ENCODE measurements at regions of chr12 and their contacts with region 1.

Region 1: GRCh38 chr12:104381731-104382480 is 74.8 kb upstream of the CHST11 start:
- DNase-seq: peak; percentile 88
- ATAC-seq: peak; percentile 95
- H3K4me3 Mint-ChIP-seq: peak overlapping the region; percentile 47
- H3K27ac Mint-ChIP-seq: no peak overlapping the region
- H3K4me1 Mint-ChIP-seq: peaks cover 10% of the 10 kb centered on the region
- H3K27me3 Mint-ChIP-seq: no peaks in the 10 kb centered on the region
- CTCF ChIP-seq: peak; percentile 91

Region 2: DNA sequence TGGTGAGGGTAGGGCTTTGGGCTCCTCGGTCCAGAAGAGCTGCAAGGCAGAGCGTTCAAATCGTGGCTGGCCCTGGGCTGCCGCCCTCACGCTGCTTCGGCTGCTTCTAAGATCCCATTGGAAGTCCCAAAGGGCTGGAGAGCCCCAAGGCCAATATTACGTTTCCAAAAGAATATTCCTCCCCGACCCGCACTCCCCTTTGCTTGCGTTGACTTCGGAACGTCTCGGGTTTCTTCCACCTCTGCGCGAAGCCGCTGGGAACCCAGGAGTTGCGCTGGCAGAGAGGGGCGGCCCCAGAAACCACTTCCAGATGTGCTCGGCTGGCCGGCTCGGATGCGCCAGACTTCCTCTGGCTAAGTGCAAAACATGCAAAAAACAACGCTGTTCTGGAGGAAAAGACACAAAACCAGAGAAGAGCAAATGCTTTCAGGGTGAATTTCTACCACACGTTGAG is 332.0 kb before region 1 on chr12 and contains the start of gene GLT8D2:
- CTCF ChIA-PET with region 1: no interaction called
- POLR2A ChIA-PET with region 1: no interaction called
- DNase-seq: peak; percentile 70
- ATAC-seq: peak; percentile 84
- H3K4me3 Mint-ChIP-seq: peak within 1 kb of the TSS; percentile 82
- H3K27ac Mint-ChIP-seq: peak within 1 kb of the TSS; percentile 80
- H3K4me1 Mint-ChIP-seq: peaks cover 18% of the 10 kb centered on the region
- H3K27me3 Mint-ChIP-seq: peaks cover 17% of the 10 kb centered on the region
- CTCF ChIP-seq: no peak
- total RNA-seq, gene GLT8D2: 4.5 to 10.2 TPM (median 8.8 TPM) in 3 replicates

Region 3: DNA sequence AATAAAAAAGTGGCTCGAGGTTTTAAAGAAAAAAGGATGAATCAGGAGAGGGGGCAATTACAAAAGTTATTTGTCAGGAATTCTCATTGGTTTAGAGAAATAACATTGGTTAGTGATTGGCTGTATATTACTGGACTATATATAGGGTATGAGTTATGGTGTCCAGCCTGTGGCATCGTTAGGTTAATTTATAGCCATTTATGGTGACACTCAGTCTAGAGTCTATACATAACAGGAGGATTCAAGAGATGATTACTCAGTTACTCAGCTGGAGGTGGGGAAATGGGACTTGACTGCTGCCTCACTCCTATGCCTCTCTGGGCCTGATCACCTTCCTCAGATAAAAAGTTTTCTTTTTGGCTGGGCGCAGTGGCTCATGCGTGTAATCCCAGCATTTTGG is 218.3 kb before region 1 on chr12:
- CTCF ChIA-PET with region 1: no interaction called
- POLR2A ChIA-PET with region 1: no interaction called
- DNase-seq: no peak
- ATAC-seq: no peak
- H3K4me3 Mint-ChIP-seq: no peak overlapping the region
- H3K27ac Mint-ChIP-seq: no peak overlapping the region
- H3K4me1 Mint-ChIP-seq: peaks cover 3% of the 10 kb centered on the region
- H3K27me3 Mint-ChIP-seq: peaks cover 4% of the 10 kb centered on the region; the same call in 1 of the 2 replicates
- CTCF ChIP-seq: no peak

Region 4: GRCh38 chr12:104263580-104264358 is 118.1 kb before region 1 on chr12:
- CTCF ChIA-PET with region 1: no interaction called
- POLR2A ChIA-PET with region 1: no interaction called
- DNase-seq: no peak
- ATAC-seq: no peak
- H3K4me3 Mint-ChIP-seq: no peak overlapping the region
- H3K27ac Mint-ChIP-seq: peak overlapping the region; percentile 16
- H3K4me1 Mint-ChIP-seq: peaks cover 11% of the 10 kb centered on the region
- H3K27me3 Mint-ChIP-seq: no peaks in the 10 kb centered on the region
- CTCF ChIP-seq: no peak

Region 5: DNA sequence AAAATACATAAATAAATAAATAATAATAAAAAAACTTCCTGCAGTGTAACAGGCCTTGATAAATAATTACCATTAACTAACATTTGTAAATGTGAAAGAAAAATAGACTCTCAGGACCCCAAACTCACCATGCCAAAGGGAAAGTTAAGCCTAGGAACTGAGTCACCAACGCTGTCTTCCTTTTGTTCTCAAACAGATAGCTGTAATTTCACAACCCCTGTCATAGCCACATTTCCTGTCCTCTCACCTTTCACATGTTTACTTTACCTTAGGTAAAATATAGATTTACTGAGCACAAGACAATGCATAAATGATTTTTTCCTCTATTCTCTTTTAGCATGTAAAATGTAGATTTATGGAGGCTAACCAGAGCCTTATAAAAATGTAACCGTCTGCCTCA is 39.0 kb after region 1 on chr12:
- CTCF ChIA-PET with region 1: interaction called, 12 read pairs
- POLR2A ChIA-PET with region 1: no interaction called
- DNase-seq: no peak
- ATAC-seq: no peak
- H3K4me3 Mint-ChIP-seq: no peak overlapping the region
- H3K27ac Mint-ChIP-seq: no peak overlapping the region
- H3K4me1 Mint-ChIP-seq: no peaks in the 10 kb centered on the region
- H3K27me3 Mint-ChIP-seq: peaks cover 7% of the 10 kb centered on the region
- CTCF ChIP-seq: no peak

Region 6: GRCh38 chr12:104506676-104507401 is 124.9 kb after region 1 on chr12:
- CTCF ChIA-PET with region 1: interaction called, 14 read pairs
- POLR2A ChIA-PET with region 1: no interaction called
- DNase-seq: peak; percentile 29
- ATAC-seq: peak; percentile 68
- H3K4me3 Mint-ChIP-seq: peak overlapping the region; percentile 15; the same call in 1 of the 2 replicates
- H3K27ac Mint-ChIP-seq: peak overlapping the region; percentile 53
- H3K4me1 Mint-ChIP-seq: peaks cover 73% of the 10 kb centered on the region
- H3K27me3 Mint-ChIP-seq: no peaks in the 10 kb centered on the region
- CTCF ChIP-seq: no peak

Region 7: GRCh38 chr12:104605685-104606084 is 223.8 kb after region 1 on chr12:
- CTCF ChIA-PET with region 1: interaction called, 10 read pairs
- POLR2A ChIA-PET with region 1: no interaction called
- DNase-seq: peak; percentile 17
- ATAC-seq: peak; percentile 82
- H3K4me3 Mint-ChIP-seq: peak overlapping the region; percentile 49
- H3K27ac Mint-ChIP-seq: peak overlapping the region; percentile 85
- H3K4me1 Mint-ChIP-seq: peaks cover 31% of the 10 kb centered on the region
- H3K27me3 Mint-ChIP-seq: no peaks in the 10 kb centered on the region
- CTCF ChIP-seq: no peak

Region 8: DNA sequence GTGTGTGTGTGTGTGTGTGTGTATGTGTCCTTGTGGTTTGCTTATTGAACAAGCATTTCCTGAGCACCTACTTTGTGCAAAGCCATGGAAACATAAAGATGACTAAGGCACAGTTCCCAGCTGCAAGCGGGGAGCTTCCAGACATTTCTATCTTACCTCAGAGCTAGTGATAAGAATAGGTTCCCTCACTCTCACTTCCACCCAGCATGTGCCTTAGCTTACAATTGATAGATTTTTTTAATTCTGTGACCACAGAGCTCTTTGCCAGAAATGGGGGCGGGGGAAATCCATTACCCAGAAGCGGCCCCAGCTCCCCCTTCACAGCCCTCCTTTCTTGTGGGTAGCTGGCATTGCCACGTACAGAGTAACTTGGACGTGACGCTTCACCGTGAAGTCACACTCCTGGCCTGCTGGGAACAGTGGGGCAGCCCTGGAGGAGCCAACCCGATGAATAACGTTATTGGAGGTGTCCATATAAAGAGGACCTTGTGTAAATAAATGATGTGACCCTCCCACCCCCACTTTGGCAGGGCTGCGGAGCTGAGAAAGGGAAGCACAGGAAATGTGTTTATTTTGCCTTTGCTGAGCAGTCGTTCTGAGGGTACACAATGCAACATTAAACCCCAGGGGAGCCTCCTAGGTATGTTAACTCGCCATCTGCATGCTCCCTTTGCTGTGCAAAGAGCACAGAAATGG is 313.7 kb after region 1 on chr12:
- CTCF ChIA-PET with region 1: interaction called, 14 read pairs
- POLR2A ChIA-PET with region 1: no interaction called
- DNase-seq: no peak
- ATAC-seq: peak; percentile 56
- H3K4me3 Mint-ChIP-seq: no peak overlapping the region
- H3K27ac Mint-ChIP-seq: no peak overlapping the region; the same call in 1 of the 2 replicates
- H3K4me1 Mint-ChIP-seq: peaks cover 25% of the 10 kb centered on the region
- H3K27me3 Mint-ChIP-seq: no peaks in the 10 kb centered on the region
- CTCF ChIP-seq: no peak

Region 9: GRCh38 chr12:104958009-104958945 is 576.4 kb after region 1 on chr12 and contains the start of gene SLC41A2:
- CTCF ChIA-PET with region 1: interaction called, 12 read pairs
- POLR2A ChIA-PET with region 1: no interaction called
- DNase-seq: peak; percentile 73
- ATAC-seq: peak; percentile 80
- H3K4me3 Mint-ChIP-seq: peak within 1 kb of the TSS; percentile 82
- H3K27ac Mint-ChIP-seq: peak within 1 kb of the TSS; percentile 41; the same call in 1 of the 2 replicates
- H3K4me1 Mint-ChIP-seq: peaks cover 24% of the 10 kb centered on the region
- H3K27me3 Mint-ChIP-seq: peaks cover 43% of the 10 kb centered on the region
- CTCF ChIP-seq: no peak; the same call in 1 of the 2 replicates
- total RNA-seq, gene SLC41A2: 2.8 to 3.8 TPM (median 3.8 TPM) in 3 replicates